ENCODE measurements at regions of chr5 and their contacts with region 1.

Region 1: DNA sequence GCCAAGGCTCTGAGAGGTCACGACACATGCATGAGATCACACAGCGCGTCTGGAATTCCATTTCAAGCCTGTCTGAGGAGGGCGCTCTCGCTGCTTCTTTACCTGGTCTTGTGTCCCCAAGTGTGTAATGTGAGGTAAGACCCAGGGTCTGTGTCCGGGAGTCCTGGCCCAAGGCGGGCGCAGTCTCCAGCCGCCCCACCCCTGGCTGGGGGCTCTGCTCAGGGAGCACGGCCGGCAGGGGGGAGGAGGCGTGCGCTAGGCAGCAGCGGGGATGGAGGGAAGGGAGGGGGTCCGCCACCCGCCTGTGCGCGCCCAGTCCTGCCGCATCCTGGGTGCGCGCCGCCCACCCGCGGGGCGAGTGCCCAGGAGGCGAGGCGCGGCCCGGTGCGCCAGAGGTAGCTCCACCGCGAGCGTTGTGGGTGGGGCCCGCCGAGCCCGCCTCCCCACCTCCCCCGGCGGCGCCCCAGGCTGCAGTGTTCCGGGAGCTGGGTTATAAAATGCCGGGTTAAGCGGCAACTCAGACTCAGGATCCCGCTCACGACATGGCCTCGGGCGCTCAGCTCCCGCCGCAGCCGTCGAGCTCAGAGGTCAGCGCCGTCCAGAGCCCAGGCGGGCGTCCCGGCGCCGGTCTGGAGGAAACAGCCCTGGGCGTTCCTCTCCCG is at the start of gene CCNI2:
- DNase-seq: no peak
- ATAC-seq: no peak
- total RNA-seq, gene CCNI2: 0.36 TPM

Region 2: DNA sequence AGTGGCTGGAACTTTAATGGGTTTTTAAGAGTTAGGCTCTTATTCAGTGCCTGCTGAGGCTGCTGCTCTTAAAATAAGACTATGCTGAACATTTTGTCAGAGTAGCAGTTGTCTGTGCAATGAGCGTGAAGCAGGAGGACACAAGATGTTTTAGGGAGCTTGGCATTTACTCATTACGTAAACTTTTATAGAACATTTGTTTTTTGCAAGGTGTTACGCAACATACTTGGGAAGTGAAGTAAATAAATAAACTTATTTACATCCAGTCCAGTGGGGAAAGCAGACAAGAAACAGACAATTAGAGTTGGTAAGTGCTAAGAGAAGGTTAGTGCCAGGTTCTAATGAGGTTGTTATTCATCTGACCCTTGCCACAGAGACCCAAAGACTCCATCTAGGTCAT is 1808.0 kb before region 1 on chr5:
- intact Hi-C with region 1: no loop called
- DNase-seq: no peak
- ATAC-seq: no peak

Region 3: GRCh38 chr5:132883261-132883834 is 136.3 kb after region 1 on chr5:
- intact Hi-C with region 1: no loop called
- DNase-seq: no peak
- ATAC-seq: peak; percentile 84

Region 4: GRCh38 chr5:133410335-133410828 is 663.3 kb after region 1 on chr5:
- intact Hi-C with region 1: loop called (anchors 5 kb)
- DNase-seq: no peak
- ATAC-seq: no peak

Measured in sciatic nerve (tissue), 2 donors.